Activated T-helper 1 cell treated with anti-CD3 and anti-CD28 coated beads, Interleukin-12 subunit alpha, Interleukin-12 subunit beta, Interleukin-2, Interleukin-4 antibody, amounts not matched to agents 30 ng/mL and 10 ng/mL and 1 ng/mL, durations not matched to agents 14 hours and 24 hours and 36 hours (primary cell): ENCODE measurements at regions of chr5 and their contacts with region 1.

Region 1: DNA sequence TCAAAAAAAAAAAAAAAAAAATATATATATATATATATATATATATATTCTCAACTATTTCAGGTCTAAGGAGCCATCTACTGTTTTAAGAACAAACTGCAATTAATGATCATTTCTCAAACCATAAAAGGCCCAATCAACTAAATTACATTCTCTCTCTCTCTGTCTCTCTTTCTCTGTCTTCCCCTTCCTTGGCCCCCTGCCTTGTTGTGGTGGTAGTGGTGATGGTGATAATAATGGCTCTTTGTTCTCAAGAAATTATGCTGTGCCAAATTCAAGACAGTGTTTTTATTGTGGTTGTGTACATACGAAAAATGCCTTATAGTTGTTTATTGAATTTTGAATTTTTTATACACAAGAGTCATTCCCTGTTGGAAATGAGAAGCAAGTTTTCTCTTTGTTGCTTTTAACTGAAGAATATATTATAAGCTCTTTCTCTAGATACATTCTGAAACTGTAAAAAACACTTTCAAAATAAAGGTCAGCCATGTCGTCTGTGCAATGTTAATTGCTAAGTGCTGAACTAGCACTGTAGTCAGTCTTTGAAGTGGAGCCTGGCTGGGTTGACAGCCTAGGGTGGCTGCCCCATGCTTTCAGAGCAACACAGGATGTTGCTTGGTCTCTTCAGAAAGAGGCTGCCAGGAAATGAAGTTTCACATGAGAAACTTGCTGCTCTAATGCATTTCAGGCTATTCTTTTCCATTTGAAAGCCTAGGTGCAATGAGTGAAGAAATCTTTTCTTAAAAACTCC is 96.0 kb downstream of the HINT1 start:
- DNase-seq: peak; percentile 65
- H3K4me3 Mint-ChIP-seq: peak overlapping the region; percentile 67
- H3K27ac Mint-ChIP-seq: peak overlapping the region; percentile 91
- H3K4me1 Mint-ChIP-seq: peaks cover 53% of the 10 kb centered on the region
- H3K27me3 Mint-ChIP-seq: no peaks in the 10 kb centered on the region

Region 2: DNA sequence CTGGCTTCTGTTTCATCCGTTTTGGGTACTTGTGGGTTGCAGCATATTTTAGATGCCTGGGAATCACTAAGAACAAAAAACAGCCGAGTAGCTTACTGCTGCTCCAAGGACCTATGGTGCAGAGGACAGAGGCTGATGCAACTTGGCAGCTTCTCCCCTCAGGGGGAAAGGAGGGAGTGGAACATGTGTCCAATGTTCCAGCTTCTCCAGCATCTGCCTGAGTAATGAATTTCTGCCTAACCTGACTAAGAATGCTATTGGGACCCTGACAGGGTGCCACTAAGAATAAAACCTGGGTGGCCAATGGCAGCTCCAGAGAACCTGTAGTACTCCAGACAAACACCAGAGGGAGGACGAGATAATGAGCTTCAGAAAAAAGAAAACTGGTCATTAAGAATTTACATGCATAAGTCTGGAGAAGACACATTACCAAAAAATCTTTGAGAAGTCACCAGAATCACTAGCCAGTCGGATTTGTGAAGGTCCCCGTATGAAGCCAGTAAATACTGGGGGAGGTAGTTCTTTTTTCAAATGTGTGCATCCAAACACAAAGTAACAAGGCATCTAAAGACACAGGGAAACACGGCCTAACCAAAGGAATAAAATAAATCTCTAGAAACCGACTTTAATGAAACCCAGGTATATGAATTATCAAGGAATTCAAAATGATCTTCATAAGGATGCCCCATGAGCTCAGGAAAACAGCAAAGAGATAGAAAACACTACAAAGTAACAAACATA is 197.6 kb before region 1 on chr5:
- intact Hi-C with region 1: loop called (anchors 1 kb)
- DNase-seq: peak; percentile 12
- H3K4me3 Mint-ChIP-seq: no peak overlapping the region
- H3K27ac Mint-ChIP-seq: no peak overlapping the region
- H3K4me1 Mint-ChIP-seq: no peaks in the 10 kb centered on the region
- H3K27me3 Mint-ChIP-seq: no peaks in the 10 kb centered on the region

Region 3: GRCh38 chr5:131042021-131042789 is 26.9 kb before region 1 on chr5:
- intact Hi-C with region 1: no loop called
- DNase-seq: no peak
- H3K4me3 Mint-ChIP-seq: no peak overlapping the region
- H3K27ac Mint-ChIP-seq: no peak overlapping the region
- H3K4me1 Mint-ChIP-seq: no peaks in the 10 kb centered on the region
- H3K27me3 Mint-ChIP-seq: peaks cover 16% of the 10 kb centered on the region

Region 4: GRCh38 chr5:131081374-131081773 is 12.3 kb after region 1 on chr5:
- intact Hi-C with region 1: loop called (anchors 1 kb)
- DNase-seq: no peak
- H3K4me3 Mint-ChIP-seq: no peak overlapping the region
- H3K27ac Mint-ChIP-seq: no peak overlapping the region
- H3K4me1 Mint-ChIP-seq: peaks cover 20% of the 10 kb centered on the region
- H3K27me3 Mint-ChIP-seq: peaks cover 11% of the 10 kb centered on the region

Region 5: DNA sequence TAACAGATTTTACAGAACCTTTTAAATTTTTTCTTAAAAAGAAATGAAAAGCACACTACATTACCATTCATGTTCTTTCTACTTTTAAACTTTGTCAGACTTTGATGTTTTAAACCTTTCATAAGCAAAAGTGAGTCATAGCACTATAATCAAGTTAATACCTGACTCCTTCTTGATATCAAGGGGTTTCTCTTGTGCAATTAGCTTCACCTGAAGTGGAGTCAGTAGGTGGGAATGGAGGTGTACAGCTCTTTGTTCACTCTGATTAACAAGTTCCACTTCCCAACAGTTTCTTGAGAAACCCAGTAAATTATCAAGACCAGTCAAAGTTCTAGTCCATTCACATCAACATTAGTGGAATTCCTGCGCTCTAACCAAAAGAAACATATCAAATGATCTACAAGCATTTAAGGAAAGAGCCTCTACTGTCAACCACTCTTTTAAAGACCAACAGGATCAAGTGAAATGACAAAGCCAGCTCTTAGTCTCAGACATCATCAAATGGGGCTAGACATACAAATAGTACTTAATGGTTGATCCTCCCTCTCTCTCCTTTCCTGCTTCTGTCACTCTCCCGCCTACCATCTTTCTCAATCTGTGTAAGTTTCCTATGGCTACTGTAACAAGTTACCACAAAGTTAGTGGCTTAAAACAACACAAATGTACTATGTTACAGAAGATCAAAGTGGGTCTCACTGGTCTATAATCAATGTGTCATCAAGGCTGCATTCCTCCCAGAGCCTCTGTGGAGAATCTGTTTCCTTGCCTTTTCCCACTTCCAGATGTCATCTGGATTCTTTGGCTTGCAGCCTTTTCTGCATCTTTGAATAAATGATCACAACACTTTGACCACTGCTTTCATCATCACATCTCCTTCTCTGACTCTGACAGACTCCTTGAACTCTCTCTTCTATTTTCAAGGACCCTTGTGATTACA is 28.0 kb after region 1 on chr5:
- intact Hi-C with region 1: loop called (anchors 1 kb)
- DNase-seq: no peak
- H3K4me3 Mint-ChIP-seq: no peak overlapping the region
- H3K27ac Mint-ChIP-seq: no peak overlapping the region
- H3K4me1 Mint-ChIP-seq: no peaks in the 10 kb centered on the region
- H3K27me3 Mint-ChIP-seq: no peaks in the 10 kb centered on the region

Region 6: GRCh38 chr5:131104169-131104808 is 35.2 kb after region 1 on chr5:
- intact Hi-C with region 1: loop called (anchors 1 kb)
- DNase-seq: no peak
- H3K4me3 Mint-ChIP-seq: no peak overlapping the region
- H3K27ac Mint-ChIP-seq: no peak overlapping the region
- H3K4me1 Mint-ChIP-seq: peaks cover 18% of the 10 kb centered on the region
- H3K27me3 Mint-ChIP-seq: no peaks in the 10 kb centered on the region

Region 7: DNA sequence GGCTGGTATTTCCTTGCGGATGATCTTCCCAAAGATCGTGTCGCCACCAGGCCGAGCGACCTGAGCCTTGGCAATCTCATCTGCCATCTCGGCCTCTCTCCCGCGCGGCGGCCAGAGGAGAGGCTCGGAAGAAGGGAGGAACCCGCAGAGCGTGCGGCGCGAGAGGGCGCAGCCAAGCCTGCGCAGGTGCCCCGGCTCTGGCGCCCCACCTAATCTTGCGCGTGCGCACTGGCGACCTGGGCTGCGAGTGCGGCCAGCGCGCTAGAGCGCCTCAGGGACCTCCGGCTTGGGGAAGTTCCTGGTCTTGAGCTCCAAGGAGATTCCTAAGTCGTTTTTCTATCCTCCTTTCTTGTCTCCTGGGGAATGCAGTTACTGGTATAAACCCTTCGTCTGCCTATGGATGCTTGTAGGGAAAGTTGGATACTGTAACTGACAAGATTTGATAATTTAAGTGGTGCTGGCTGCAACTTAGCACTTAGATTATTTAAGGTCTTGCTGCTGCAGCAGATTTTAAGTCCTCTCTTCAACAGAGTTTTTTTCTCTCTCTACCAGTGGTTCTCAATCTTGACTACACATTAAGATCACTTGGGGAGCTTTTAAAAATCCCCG is 96.2 kb after region 1 on chr5 and contains the start of gene HINT1:
- intact Hi-C with region 1: loop called (anchors 5 kb)
- DNase-seq: peak; percentile 93
- H3K4me3 Mint-ChIP-seq: peak within 1 kb of the TSS; percentile 99
- H3K27ac Mint-ChIP-seq: peak within 1 kb of the TSS; percentile 99
- H3K4me1 Mint-ChIP-seq: peaks cover 55% of the 10 kb centered on the region
- H3K27me3 Mint-ChIP-seq: peaks cover 2% of the 10 kb centered on the region
- total RNA-seq, gene HINT1: 249 and 262 TPM in 2 replicates